HEK293 (cell line): ENCODE measurements at regions of chr5 and their contacts with region 1.

Region 1: DNA sequence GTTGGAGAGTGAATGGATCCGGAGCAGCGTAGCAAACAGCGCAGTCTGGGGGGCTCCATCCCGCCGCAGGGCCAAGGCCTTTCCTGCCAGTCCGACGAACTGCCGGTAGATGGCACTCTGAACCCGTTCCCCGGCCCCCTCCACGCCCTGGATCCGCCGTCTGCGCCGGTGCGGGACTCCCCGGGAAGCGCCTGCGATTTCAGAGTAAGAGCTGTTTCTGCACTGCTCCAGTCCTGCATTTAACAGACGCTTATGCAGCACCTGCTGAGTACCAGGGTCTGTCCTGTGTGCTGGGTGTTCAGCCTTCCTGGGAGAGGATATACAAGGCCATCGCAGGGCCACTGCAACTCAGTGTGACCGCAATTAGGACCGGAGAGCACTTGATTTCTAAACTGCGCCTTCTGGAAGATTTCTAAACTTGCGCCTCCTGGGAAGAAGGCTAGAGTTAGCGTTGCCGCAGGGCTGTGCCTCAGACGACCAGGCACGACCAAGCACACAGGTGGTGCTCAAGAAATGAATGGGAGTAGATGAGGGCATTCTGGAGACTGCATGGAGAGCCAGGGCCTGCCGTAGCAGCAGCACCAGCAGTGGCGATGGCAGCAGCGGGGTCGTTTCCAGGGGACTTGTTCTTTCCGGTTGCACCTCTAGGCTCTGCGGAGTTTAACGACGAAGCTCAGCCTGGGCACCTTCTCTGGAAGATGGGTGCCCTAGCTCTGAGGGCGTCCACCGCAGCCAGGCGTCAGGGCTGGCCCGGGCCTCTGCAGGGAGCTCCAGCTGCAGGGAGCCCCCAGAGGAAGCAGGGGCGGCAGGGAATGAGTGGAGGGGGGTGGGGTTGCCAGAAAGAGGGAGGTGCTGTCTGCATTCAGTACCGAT is 14.3 kb upstream of the TIFAB start:
- H3K4me3 ChIP-seq: no peak overlapping the region
- H3K27ac ChIP-seq: no peak overlapping the region
- H3K4me1 ChIP-seq: no peaks in the 10 kb centered on the region
- CTCF ChIP-seq: peak; percentile 93

Region 2: GRCh38 chr5:134864707-134865106 is 601.7 kb before region 1 on chr5:
- CTCF ChIA-PET with region 1: no interaction called
- POLR2A ChIA-PET with region 1: no interaction called
- H3K4me3 ChIP-seq: no peak overlapping the region
- H3K27ac ChIP-seq: no peak overlapping the region
- H3K4me1 ChIP-seq: no peaks in the 10 kb centered on the region
- CTCF ChIP-seq: no peak

Region 3: GRCh38 chr5:135376961-135377624 is 89.3 kb before region 1 on chr5:
- CTCF ChIA-PET with region 1: no interaction called
- POLR2A ChIA-PET with region 1: no interaction called
- H3K4me3 ChIP-seq: no peak overlapping the region
- H3K27ac ChIP-seq: no peak overlapping the region
- H3K4me1 ChIP-seq: no peaks in the 10 kb centered on the region
- CTCF ChIP-seq: no peak

Region 4: DNA sequence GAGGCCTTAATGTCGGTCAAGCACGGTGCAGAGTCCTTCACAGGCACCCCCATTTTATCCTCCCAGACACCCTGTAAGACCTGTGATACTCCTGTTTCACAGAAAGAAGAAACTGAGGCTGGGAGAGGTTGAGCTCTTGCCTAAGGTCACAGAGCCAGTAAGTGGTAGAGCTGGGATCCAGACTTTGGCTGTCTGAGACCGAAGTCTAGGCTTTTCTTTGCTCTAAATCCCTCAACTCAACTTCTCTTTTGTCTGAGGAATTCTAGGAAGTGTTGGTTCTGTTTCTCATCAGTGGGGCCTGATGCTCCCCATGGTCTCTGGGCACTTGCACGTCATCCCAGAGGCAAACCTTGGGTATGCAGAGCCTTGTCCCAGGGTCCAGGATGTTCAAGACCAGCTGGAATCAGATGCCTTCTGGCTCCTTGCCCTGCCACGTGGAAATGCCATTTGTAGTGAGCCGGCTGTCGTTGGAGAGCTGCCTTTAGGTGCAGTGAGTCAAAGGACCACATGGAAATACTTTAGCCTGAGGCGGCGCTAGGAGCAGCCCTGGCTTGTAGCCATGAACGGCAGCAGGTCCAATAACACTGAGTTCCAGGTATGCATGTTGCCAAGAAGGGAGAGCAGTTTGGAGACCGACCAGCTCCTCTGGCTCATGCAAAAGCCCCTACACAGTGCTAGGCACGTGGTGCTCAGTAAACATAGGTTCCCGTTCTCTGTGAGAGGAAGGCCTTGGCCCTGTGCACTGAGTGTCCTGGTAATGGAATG is 28.4 kb before region 1 on chr5:
- CTCF ChIA-PET with region 1: interaction called, 11 read pairs
- POLR2A ChIA-PET with region 1: interaction called, 4 read pairs
- H3K4me3 ChIP-seq: no peak overlapping the region
- H3K27ac ChIP-seq: no peak overlapping the region
- H3K4me1 ChIP-seq: no peaks in the 10 kb centered on the region
- CTCF ChIP-seq: no peak

Region 5: GRCh38 chr5:135476615-135477582 is 10.5 kb after region 1 on chr5:
- CTCF ChIA-PET with region 1: interaction called, 20 read pairs
- POLR2A ChIA-PET with region 1: no interaction called
- H3K4me3 ChIP-seq: no peak overlapping the region
- H3K27ac ChIP-seq: no peak overlapping the region
- H3K4me1 ChIP-seq: peaks cover 5% of the 10 kb centered on the region; the same call in 1 of the 2 replicates
- CTCF ChIP-seq: no peak

Region 6: DNA sequence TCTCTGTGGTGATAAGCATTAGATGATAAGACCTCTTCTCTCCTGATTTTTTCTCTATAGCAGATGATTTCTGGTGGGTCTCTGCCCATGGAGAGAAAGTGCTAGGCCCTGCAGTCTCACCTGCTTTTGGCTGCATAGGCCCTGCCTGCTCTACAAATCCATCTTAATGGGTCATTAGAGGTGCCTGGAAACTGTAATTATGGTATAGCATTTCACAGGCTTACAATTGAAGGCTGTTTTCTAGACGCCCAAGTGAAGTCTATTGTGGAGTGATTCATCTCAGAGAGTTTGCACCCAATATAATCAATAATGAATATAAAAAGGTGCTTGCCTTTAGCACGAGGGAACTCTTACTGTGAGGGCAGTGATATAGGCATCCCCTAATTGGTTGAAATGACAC is 35.6 kb after region 1 on chr5:
- CTCF ChIA-PET with region 1: interaction called, 12 read pairs
- POLR2A ChIA-PET with region 1: no interaction called
- H3K4me3 ChIP-seq: no peak overlapping the region
- H3K27ac ChIP-seq: no peak overlapping the region
- H3K4me1 ChIP-seq: peaks cover 4% of the 10 kb centered on the region
- CTCF ChIP-seq: no peak

Region 7: DNA sequence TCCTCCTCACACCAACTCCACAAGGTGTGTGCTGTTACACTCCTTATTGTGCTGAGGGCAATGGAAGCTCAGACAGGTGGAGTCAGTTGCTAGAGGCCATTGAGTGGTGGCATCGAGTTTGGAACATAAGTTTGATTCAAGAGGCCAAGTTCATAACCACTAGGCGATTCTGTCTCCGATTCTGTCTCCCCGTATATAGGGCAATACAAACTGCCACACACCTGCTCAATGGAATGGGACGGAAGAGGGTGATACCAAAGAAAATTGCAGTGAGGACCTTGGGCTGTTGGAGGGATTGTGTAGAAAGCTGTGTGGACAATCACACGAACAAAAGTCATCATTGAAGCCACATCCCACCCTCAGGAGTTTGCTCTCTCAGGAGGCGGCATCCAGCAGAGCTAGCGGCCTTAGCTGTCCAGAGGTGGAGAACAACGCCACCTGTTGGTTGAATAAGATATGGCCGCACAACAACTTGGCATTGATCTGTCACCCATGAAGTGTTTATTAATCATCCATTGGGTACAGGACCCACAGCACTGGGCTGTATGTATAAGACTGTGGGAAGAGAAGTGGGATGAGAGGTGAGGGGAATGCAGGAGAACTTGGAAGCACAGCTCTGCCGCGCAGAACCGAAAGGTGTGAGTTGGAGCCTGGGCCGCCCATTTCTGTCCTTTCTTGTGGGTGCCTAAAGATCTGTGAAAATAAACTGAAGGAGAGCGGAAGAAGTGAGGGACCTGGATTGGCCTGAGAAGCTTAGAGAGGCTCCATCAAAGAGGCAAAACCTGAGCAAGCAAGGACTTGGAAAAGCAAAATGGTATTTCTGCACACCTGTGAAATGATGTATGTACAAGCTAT is 85.4 kb after region 1 on chr5:
- CTCF ChIA-PET with region 1: interaction called, 853 read pairs
- POLR2A ChIA-PET with region 1: interaction called, 5 read pairs
- H3K4me3 ChIP-seq: no peak overlapping the region
- H3K27ac ChIP-seq: no peak overlapping the region
- H3K4me1 ChIP-seq: no peaks in the 10 kb centered on the region
- CTCF ChIP-seq: peak; percentile 74

Region 8: GRCh38 chr5:135729321-135729786 is 262.9 kb after region 1 on chr5:
- CTCF ChIA-PET with region 1: interaction called, 20 read pairs
- POLR2A ChIA-PET with region 1: no interaction called
- H3K4me3 ChIP-seq: no peak overlapping the region
- H3K27ac ChIP-seq: no peak overlapping the region
- H3K4me1 ChIP-seq: no peaks in the 10 kb centered on the region
- CTCF ChIP-seq: no peak